ENCODE measurements at regions of chr16 and their contacts with region 1.

Region 1: GRCh38 chr16:19067349-19068236 is at the start of gene COQ7:
- DNase-seq: peak; percentile 99
- ATAC-seq: peak; percentile 97
- H3K4me3 ChIP-seq: peak within 1 kb of the TSS; percentile 79 to 93
- H3K27ac ChIP-seq: peak within 1 kb of the TSS; percentile 95
- H3K4me1 ChIP-seq: peaks cover 3% of the 10 kb centered on the region; the same call in 1 of the 2 replicates
- H3K27me3 ChIP-seq: no peaks in the 10 kb centered on the region
- CTCF ChIP-seq: no peak
- total RNA-seq, gene COQ7: 39.6 TPM

Region 2: DNA sequence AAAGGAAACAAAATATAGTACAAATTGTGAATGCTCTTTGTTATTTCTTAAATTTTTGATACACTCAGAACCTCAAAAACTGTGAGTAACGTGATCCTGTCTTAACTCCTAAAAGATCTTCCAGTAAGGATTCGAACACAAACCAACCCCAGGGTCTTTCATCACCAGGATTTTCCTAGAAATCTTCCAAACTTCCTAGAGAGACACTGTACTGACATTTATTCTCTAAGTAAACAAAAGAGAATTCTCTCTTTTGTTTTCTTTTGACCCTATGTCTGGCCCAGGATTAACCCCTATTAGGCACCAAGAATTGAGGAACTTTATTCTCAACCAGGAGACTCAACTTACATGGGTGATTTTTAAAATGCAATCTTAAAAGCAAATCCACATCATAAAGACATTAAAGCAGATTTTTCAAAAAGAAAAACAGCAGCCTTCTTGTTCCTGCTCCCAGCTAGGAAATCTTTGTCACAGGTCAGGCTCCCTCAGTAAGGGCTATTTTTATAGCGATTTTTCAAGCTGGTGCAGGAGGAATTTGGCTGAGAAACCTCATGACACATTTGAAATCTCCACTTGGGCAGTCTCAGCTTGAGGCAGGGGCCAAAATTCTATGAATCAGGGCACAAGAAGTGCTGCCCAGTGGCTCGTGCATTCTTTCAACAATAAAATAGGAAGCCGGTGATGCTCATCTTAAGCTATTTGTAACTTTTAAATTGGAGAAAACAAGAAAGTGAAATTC is 135.2 kb before region 1 on chr16:
- CTCF ChIA-PET with region 1: no interaction called
- POLR2A ChIA-PET with region 1: interaction called, 13 read pairs
- in situ Hi-C with region 1: no loop called
- intact Hi-C with region 1: no loop called
- DNase-seq: no peak
- ATAC-seq: no peak
- H3K4me3 ChIP-seq: no peak overlapping the region
- H3K27ac ChIP-seq: no peak overlapping the region
- H3K4me1 ChIP-seq: peaks cover 12% of the 10 kb centered on the region; the same call in 1 of the 2 replicates
- H3K27me3 ChIP-seq: no peaks in the 10 kb centered on the region
- CTCF ChIP-seq: no peak

Region 3: GRCh38 chr16:18943414-18943813 is 124.2 kb before region 1 on chr16:
- CTCF ChIA-PET with region 1: no interaction called
- POLR2A ChIA-PET with region 1: interaction called, 10 read pairs
- in situ Hi-C with region 1: no loop called
- intact Hi-C with region 1: no loop called
- DNase-seq: no peak
- ATAC-seq: no peak
- H3K4me3 ChIP-seq: no peak overlapping the region
- H3K27ac ChIP-seq: no peak overlapping the region
- H3K4me1 ChIP-seq: no peaks in the 10 kb centered on the region; the same call in 1 of the 2 replicates
- H3K27me3 ChIP-seq: no peaks in the 10 kb centered on the region
- CTCF ChIP-seq: no peak; the same call in 1 of the 2 replicates

Region 4: DNA sequence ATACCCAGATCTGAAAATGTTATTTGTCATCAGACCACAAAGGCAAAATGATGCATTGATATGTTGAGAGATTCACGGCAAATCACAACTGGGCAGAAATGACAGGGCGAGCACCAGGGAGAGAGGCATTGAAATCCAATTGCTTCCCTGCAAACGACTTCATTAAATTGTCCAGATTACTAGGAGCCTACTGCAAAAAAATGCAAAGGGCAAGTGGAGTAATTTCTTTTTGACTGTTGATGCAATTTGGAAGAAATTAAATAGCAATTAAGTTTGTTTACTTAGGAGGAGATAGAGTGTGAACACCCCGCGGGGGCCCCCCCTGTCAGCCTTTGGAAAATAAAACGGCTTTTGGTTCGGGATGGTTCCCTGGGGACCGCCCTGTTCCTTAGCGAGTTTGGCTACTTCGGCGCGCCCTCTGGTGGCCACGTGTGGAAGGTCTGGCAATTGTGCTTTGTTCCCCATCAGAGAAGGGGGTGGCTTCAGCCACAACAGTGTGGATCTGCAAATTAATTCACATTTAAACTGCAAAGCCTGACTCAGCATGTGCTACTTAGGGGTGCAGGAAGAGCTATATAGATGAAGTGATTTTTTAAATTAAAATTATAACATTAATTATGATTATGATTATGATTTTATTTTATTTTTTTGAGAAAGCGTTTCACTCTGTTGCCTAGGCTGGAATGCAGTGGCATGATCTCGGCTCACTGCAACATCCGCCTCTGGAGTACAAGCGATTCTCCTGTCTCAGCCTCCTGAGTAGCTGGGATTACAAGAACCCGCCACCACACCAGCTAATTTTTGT is 98.3 kb before region 1 on chr16:
- CTCF ChIA-PET with region 1: no interaction called
- POLR2A ChIA-PET with region 1: interaction called, 10 read pairs
- in situ Hi-C with region 1: no loop called
- intact Hi-C with region 1: no loop called
- DNase-seq: no peak
- ATAC-seq: peak; percentile 98
- H3K4me3 ChIP-seq: peak overlapping the region; percentile 27 to 42
- H3K27ac ChIP-seq: no peak overlapping the region
- H3K4me1 ChIP-seq: peaks cover 4% of the 10 kb centered on the region; the same call in 1 of the 2 replicates
- H3K27me3 ChIP-seq: no peaks in the 10 kb centered on the region
- CTCF ChIP-seq: peak; percentile 99

Region 5: DNA sequence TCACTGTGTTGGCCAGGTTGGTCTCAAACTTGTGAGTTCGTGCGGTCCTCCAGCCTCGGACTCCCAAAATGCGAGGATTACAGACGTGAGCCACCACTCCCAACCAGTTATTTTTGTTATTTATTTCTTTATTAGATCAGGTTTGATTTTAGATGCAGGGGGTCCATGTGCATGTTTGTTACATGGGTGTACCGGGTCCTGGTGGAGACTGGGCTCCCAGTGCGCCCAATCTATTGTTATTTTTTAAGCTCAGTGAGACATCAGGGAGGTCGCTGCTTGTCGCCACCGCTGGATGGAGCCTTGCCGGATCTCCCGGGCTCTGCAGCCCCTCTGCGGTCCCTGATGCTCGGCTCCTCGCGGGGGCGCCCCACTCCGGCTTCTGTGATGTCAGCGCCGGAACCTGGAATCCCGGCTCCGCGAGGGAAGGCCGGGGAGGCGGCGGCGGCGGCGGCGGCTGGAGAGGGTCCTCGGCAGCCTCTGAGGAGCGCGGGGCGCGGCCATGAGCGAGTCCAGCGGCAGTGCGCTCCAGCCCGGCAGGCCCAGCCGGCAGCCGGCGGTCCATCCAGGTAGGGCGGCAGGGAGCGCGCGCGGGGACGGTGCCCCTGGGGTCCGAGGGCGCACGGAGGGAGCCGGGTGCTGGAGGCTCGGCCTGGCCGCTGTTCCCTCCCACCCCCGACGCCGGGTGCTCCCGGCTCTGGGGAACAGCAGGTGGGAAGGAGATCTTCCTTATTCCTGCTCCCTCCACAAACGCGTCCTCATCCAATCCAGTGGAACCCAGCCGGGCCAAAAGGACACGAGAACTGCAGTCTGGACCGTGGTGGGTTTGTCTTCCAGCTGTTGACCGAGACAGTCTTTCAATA is 83.8 kb before region 1 on chr16 and contains the start of gene TMC7:
- CTCF ChIA-PET with region 1: interaction called, 6 read pairs
- POLR2A ChIA-PET with region 1: interaction called, 3 read pairs
- in situ Hi-C with region 1: no loop called
- intact Hi-C with region 1: loop called (anchors 1 kb)
- DNase-seq: peak; percentile 74
- ATAC-seq: peak; percentile 99
- H3K4me3 ChIP-seq: peak within 1 kb of the TSS; percentile 58 to 98
- H3K27ac ChIP-seq: peak within 1 kb of the TSS; percentile 87
- H3K4me1 ChIP-seq: peaks cover 6% of the 10 kb centered on the region; the same call in 1 of the 2 replicates
- H3K27me3 ChIP-seq: no peaks in the 10 kb centered on the region
- CTCF ChIP-seq: peak; percentile 100
- total RNA-seq, gene TMC7: 5.1 TPM

Region 6: GRCh38 chr16:19008245-19009187 is 59.1 kb before region 1 on chr16:
- CTCF ChIA-PET with region 1: no interaction called
- POLR2A ChIA-PET with region 1: interaction called, 10 read pairs
- in situ Hi-C with region 1: no loop called
- intact Hi-C with region 1: no loop called
- DNase-seq: no peak
- ATAC-seq: peak; percentile 46
- H3K4me3 ChIP-seq: no peak overlapping the region
- H3K27ac ChIP-seq: no peak overlapping the region
- H3K4me1 ChIP-seq: peaks cover 8% of the 10 kb centered on the region
- H3K27me3 ChIP-seq: no peaks in the 10 kb centered on the region
- CTCF ChIP-seq: no peak

Region 7: DNA sequence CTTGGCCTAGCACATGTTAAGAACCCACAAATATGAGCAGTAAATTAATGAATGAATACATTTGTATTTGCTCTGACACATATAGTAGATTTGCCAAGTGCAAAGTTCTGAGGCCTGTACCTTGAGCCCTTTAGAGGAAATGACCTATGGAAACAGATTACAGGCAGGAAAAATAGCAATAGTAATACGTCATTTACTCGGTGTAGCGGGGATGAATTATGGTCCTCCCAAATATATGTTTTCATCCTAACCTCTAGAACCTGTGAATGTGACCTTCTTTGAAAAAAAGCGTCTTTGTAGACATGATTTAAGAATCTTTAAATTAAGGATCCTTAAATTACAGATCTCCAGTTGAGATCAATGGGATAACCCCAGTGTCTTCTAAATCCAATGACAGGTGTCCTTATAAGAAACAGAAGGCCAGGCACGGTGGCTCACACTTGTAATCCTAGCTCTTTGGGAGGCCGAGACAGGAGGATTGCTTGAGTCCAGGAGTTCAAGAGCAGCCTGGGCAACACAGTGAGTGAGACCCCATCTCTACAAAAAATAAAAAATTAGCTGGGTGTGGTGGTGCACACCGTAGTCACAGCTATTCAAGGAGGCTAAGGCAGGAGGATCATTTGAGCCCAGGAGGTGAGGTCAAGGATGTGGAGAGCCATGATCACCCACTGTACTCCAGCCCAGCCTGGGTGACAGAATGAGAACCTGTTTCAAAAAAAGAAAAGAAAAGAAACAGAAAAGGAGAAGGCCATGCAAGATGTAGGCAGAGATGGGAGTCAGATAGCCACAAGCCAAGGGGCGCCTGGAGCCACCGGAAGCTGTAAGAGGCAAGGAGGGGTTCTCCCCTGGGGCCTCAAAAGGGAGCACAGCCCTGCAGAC is 41.1 kb after region 1 on chr16:
- CTCF ChIA-PET with region 1: no interaction called
- POLR2A ChIA-PET with region 1: no interaction called
- in situ Hi-C with region 1: no loop called
- intact Hi-C with region 1: no loop called
- DNase-seq: no peak
- ATAC-seq: no peak
- H3K4me3 ChIP-seq: no peak overlapping the region
- H3K27ac ChIP-seq: no peak overlapping the region
- H3K4me1 ChIP-seq: peaks cover 28% of the 10 kb centered on the region
- H3K27me3 ChIP-seq: no peaks in the 10 kb centered on the region
- CTCF ChIP-seq: no peak

Region 8: DNA sequence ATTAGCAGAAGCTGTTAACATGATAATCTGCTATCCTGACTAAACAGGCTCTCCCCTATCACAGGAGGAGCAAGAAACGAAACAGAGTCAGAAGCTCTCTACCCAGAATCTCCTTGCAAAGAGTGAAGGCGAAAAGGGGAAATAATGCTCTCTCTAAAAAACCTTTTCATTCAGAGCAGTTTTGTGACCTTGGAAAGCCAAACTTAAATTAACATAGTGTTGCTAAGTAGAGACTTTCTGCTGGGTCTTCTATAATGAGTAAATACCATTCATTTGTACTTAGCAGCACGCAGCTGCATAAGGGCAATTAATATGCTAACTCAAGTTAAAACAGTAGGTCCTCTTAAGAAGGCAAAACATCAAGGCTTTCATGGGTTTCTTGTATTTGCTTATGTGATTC is 1107.8 kb after region 1 on chr16:
- CTCF ChIA-PET with region 1: no interaction called
- POLR2A ChIA-PET with region 1: no interaction called
- in situ Hi-C with region 1: no loop called
- intact Hi-C with region 1: no loop called
- DNase-seq: no peak
- ATAC-seq: no peak
- H3K4me3 ChIP-seq: no peak overlapping the region
- H3K27ac ChIP-seq: no peak overlapping the region
- H3K4me1 ChIP-seq: no peaks in the 10 kb centered on the region
- H3K27me3 ChIP-seq: peaks cover 15% of the 10 kb centered on the region
- CTCF ChIP-seq: no peak